ENCODE measurements at regions of chr6 and their contacts with region 1.

Region 1: GRCh38 chr6:116779573-116780164 is 14.2 kb upstream of the FAM162B start:
- DNase-seq: peak in 1 of 2 experiments; percentile 47
- H3K4me3 ChIP-seq: no peak overlapping the region
- H3K27ac ChIP-seq: no peak overlapping the region
- H3K4me1 ChIP-seq: no peaks in the 10 kb centered on the region
- H3K27me3 ChIP-seq: no peaks in the 10 kb centered on the region
- CTCF ChIP-seq: peak in 2 of 3 experiments; percentile 38 to 44; a peak in 2 of 4 replicates
- EP300 ChIP-seq: no peak
- POLR2A ChIP-seq: no peak
- RAD21 ChIP-seq: peak; percentile 66 to 69

Region 2: DNA sequence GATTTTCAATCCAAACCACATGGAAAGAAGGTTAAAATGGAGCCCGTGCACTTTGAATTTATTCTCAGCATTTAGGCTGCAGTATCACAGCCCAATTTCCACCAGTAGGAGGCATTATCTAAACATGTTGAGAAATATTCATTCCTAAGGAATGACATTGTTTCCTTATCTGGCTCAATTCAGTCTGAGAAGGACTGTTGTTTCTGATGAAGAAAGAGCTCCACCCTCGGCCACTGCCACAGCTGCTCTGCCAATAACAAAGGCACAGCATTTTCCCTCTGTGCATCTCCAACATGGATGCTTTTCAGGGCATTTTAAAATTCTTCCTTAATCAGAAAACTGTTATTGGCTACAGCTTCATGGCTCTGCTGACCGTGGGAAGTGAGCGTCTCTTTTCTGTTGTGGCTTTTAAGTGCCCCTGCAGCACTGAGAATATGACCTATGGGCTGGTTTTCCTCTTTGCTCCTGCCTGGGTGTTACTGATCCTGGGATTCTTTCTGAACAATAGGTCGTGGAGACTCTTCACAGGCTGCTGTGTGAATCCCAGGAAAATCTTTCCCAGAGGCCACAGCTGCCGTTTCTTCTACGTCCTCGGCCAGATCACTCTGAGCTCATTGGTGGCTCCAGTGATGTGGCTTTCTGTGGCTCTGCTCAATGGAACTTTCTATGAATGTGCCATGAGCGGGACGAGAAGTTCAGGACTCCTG is 268.1 kb before region 1 on chr6 and contains the start of gene CALHM5:
- CTCF ChIA-PET with region 1: no interaction called
- POLR2A ChIA-PET with region 1: no interaction called
- DNase-seq: no peak
- H3K4me3 ChIP-seq: no peak within 1 kb of the TSS
- H3K27ac ChIP-seq: peak within 1 kb of the TSS; percentile 31; the same call in 1 of the 2 replicates
- H3K4me1 ChIP-seq: peaks cover 0 to 11% (median 4%) of the 10 kb centered on the region in 4 experiments; a peak in 4 of 7 replicates
- H3K27me3 ChIP-seq: peaks cover 0 to 1% (median 0%) of the 10 kb centered on the region in 4 experiments; a peak in 1 of 7 replicates
- CTCF ChIP-seq: peak in 2 of 3 experiments; percentile 38 to 66; a peak in 2 of 4 replicates
- EP300 ChIP-seq: no peak
- POLR2A ChIP-seq: no peak
- RAD21 ChIP-seq: peak; percentile 30 to 44
- total RNA-seq, gene CALHM5: 0.09 and 0.17 TPM in 2 replicates

Region 3: GRCh38 chr6:116764961-116765851 is 14.5 kb before region 1 on chr6 and contains the start of gene FAM162B:
- CTCF ChIA-PET with region 1: interaction called, 21 read pairs
- POLR2A ChIA-PET with region 1: no interaction called
- DNase-seq: peak; percentile 38 to 75
- H3K4me3 ChIP-seq: peak within 1 kb of the TSS; percentile 33 to 72 (median 68)
- H3K27ac ChIP-seq: no peak within 1 kb of the TSS
- H3K4me1 ChIP-seq: peaks cover 0 to 2% (median 0%) of the 10 kb centered on the region in 4 experiments; a peak in 3 of 7 replicates
- H3K27me3 ChIP-seq: peaks cover 8 to 31% (median 24%) of the 10 kb centered on the region in 4 experiments
- CTCF ChIP-seq: no peak
- EP300 ChIP-seq: no peak
- POLR2A ChIP-seq: no peak
- RAD21 ChIP-seq: 0 out of 4 replicates have a peak, but pooled peaks of 1 of the 2 experiments have one; percentile 1
- total RNA-seq, gene FAM162B: 2.9 and 3.2 TPM in 2 replicates

Region 4: GRCh38 chr6:116836606-116837342 is 57.1 kb after region 1 on chr6:
- CTCF ChIA-PET with region 1: interaction called, 11 read pairs
- POLR2A ChIA-PET with region 1: no interaction called
- DNase-seq: no peak
- H3K4me3 ChIP-seq: no peak overlapping the region
- H3K27ac ChIP-seq: no peak overlapping the region
- H3K4me1 ChIP-seq: no peaks in the 10 kb centered on the region
- H3K27me3 ChIP-seq: no peaks in the 10 kb centered on the region
- CTCF ChIP-seq: no peak
- EP300 ChIP-seq: no peak
- POLR2A ChIP-seq: no peak
- RAD21 ChIP-seq: no peak

Region 5: DNA sequence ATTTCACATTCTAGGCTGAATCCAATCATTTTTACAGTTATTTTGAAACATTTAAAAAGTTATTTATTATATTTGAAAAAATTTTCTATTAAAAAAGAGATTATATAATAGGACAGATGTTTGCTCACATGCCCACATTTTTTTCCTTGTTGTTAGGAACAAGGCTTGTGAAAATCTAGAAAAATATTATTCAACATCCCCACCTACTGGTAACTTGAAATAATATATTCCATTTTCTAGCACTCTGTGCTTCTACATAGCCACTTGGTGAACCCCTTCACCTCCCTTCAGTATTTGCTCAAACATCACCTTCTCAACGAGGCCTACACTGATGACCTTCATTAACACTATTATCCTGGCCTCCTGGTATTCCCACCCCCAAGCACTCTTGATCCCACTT is 67.6 kb after region 1 on chr6:
- CTCF ChIA-PET with region 1: interaction called, 34 read pairs
- POLR2A ChIA-PET with region 1: no interaction called
- DNase-seq: no peak
- H3K4me3 ChIP-seq: no peak overlapping the region
- H3K27ac ChIP-seq: no peak overlapping the region
- H3K4me1 ChIP-seq: no peaks in the 10 kb centered on the region
- H3K27me3 ChIP-seq: no peaks in the 10 kb centered on the region
- CTCF ChIP-seq: peak in 2 of 3 experiments; percentile 22 to 24; a peak in 2 of 4 replicates
- EP300 ChIP-seq: no peak
- POLR2A ChIP-seq: no peak
- RAD21 ChIP-seq: peak; percentile 49 to 52